Naive thymus-derived CD8-positive, alpha-beta T cell (primary cell): ENCODE measurements at regions of chr6 and their contacts with region 1.

Region 1: GRCh38 chr6:37516076-37516919 is 16.6 kb upstream of the CCDC167 start:
- DNase-seq: peak; percentile 79 to 97 (median 93)
- ATAC-seq: peak; percentile 86 to 89
- H3K4me3 Mint-ChIP-seq: peak overlapping the region; percentile 80 to 97 (median 92)
- H3K27ac Mint-ChIP-seq: peak overlapping the region; percentile 97 to 100 (median 100)
- H3K4me1 Mint-ChIP-seq: peaks cover 53 to 93% (median 87%) of the 10 kb centered on the region in 4 donors
- H3K27me3 Mint-ChIP-seq: no peaks in the 10 kb centered on the region

Region 2: DNA sequence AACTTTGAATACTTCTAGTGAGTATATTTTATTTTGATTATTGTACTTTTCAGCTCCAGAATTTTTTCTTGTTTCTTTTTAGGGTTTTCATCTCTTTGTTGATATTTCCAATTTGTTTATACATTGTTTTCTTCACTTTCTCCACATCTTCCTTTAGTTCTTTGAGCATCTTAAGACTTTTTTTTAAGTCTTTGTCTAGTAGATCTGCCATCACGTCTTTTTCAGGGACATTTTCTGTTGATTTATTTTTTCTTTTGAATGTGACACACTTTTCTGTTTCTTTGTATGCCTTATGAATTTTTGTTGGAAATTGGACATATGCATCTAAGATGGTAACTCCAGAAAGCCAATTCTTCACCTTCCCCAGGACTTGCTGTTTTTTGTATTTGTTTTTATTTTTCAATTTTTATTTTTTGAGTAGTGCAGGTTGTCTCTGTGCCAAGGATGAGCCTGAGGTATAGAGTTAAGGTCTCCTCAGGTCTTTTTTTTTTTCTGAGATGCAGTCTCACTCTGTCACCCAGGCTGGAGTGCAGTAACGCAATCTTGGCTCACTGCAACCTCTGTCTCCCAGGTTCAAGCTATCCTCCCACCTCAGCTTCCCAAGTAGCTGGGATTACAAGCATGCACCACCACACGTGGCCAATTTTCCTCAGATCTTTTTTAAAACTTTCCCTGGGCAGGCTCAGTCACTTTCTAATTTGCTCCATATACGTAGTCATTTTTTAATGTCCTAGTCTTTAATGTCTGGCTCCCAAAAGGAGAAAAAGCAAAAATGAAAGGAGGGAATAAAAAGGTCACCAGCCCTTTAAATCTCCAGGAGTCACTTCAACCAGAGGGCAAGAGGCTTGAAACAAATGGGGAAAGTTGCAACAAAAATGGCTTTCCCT is 90.0 kb before region 1 on chr6:
- POLR2A ChIA-PET with region 1: no interaction called
- DNase-seq: no peak
- ATAC-seq: no peak
- H3K4me3 Mint-ChIP-seq: no peak overlapping the region
- H3K27ac Mint-ChIP-seq: no peak overlapping the region
- H3K4me1 Mint-ChIP-seq: no peaks in the 10 kb centered on the region
- H3K27me3 Mint-ChIP-seq: peaks cover 0 to 32% (median 6%) of the 10 kb centered on the region in 5 donors

Region 3: DNA sequence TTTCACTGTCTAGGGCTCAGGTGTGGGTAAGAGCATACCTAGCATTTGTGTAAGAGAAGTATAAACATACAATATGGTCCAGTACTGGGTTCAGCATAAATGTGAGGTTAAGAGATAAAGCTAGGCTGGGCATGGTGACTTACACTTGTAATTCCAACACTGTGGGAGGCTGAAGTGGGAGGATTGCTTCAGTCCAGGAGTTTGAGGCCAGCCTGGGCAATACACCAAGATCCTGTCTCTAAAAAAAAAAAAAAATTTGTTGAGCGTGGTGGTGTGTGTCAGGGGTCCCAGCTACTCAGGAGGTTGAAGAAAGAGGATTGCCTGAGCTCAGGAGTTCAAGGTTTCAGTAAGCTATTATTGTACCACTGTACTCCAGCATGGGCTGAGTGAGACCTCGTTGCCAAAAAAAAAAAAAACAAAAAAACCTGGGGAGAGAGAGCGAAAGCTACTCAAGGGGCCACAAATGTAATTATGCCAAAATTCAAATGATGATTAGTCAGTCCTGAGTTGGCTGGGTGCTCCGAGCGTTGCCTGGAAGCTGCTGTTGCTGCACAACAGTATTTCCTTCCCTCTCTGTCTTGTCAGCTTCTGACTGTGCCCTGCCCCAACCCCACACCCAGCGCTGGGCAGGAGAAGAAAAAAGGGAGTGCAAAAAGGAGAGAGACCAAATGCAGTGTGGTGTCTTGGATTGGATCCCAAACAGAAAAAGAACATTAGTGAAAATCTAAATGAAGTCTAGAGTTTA is 59.3 kb before region 1 on chr6:
- POLR2A ChIA-PET with region 1: no interaction called
- DNase-seq: no peak
- ATAC-seq: no peak
- H3K4me3 Mint-ChIP-seq: no peak overlapping the region
- H3K27ac Mint-ChIP-seq: peak overlapping the region in 4 of 10 donors; percentile 38 to 82 (median 58)
- H3K4me1 Mint-ChIP-seq: peaks cover 0 to 5% (median 1%) of the 10 kb centered on the region in 4 donors
- H3K27me3 Mint-ChIP-seq: no peaks in the 10 kb centered on the region

Region 4: GRCh38 chr6:37489660-37490361 is 26.5 kb before region 1 on chr6:
- POLR2A ChIA-PET with region 1: interaction called, 29 read pairs
- DNase-seq: peak in 4 of 10 donors; percentile 24 to 39 (median 30)
- ATAC-seq: peak; percentile 85
- H3K4me3 Mint-ChIP-seq: peak overlapping the region in 7 of 10 donors; percentile 11 to 86 (median 32)
- H3K27ac Mint-ChIP-seq: peak overlapping the region; percentile 70 to 100 (median 88)
- H3K4me1 Mint-ChIP-seq: peaks cover 36 to 66% (median 44%) of the 10 kb centered on the region in 4 donors
- H3K27me3 Mint-ChIP-seq: no peaks in the 10 kb centered on the region

Region 5: DNA sequence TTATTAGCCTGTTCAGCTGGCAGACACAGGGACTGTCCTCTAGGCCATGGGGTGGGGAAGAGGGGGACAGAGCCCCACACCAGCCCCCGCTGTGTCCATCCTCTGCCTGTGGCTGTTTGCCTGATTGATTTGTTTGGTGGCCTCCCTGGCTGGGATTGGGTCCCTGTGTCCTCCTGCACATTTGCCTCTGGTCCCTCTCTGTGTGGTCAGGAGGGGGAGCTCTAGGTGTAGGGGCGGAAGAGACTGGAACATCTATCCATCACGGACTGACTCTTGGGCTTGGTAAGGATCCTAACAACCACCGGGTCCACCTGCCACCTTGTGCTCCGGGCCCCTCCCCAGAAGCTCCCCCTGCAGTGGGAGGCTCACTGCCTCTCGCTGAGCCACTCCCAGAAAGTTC is 21.8 kb after region 1 on chr6:
- POLR2A ChIA-PET with region 1: interaction called, 54 read pairs
- DNase-seq: no peak
- ATAC-seq: no peak
- H3K4me3 Mint-ChIP-seq: no peak overlapping the region
- H3K27ac Mint-ChIP-seq: peak overlapping the region in 3 of 10 donors; percentile 54 to 86 (median 67)
- H3K4me1 Mint-ChIP-seq: peaks cover 9 to 42% (median 15%) of the 10 kb centered on the region in 4 donors
- H3K27me3 Mint-ChIP-seq: peaks cover 0 to 2% (median 0%) of the 10 kb centered on the region in 5 donors

Region 6: DNA sequence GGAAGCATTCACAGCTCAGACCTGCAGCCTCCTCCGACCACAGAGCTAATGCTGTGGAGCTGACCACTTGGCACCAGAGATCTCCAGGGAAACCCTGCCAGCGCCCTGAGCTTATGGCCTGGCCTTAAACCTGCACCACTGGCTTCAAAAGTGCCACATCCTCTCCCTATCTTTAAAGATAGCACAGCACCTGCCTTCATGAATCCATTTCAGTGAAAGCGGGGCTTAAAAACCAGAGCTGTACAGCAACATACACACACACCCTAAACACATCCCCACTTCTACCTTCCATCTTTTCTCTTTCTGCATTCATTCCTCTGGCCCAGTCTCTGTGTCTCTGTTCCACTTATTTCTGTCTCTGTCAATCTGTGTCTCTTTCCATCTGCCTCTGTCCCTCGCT is 43.2 kb after region 1 on chr6:
- POLR2A ChIA-PET with region 1: interaction called, 36 read pairs
- DNase-seq: peak in 3 of 10 donors; percentile 21 to 39 (median 31)
- ATAC-seq: peak; percentile 57 to 78
- H3K4me3 Mint-ChIP-seq: peak overlapping the region; percentile 12 to 63 (median 54)
- H3K27ac Mint-ChIP-seq: peak overlapping the region; percentile 11 to 86 (median 72)
- H3K4me1 Mint-ChIP-seq: peaks cover 25 to 76% (median 28%) of the 10 kb centered on the region in 4 donors
- H3K27me3 Mint-ChIP-seq: no peaks in the 10 kb centered on the region

Region 7: GRCh38 chr6:37576336-37576813 is 60.1 kb after region 1 on chr6:
- POLR2A ChIA-PET with region 1: no interaction called
- DNase-seq: no peak
- ATAC-seq: no peak
- H3K4me3 Mint-ChIP-seq: peak overlapping the region in 1 of 10 donors; percentile 29
- H3K27ac Mint-ChIP-seq: no peak overlapping the region
- H3K4me1 Mint-ChIP-seq: peaks cover 0 to 1% (median 0%) of the 10 kb centered on the region in 4 donors
- H3K27me3 Mint-ChIP-seq: peaks cover 0 to 10% (median 4%) of the 10 kb centered on the region in 5 donors

Region 8: GRCh38 chr6:37819177-37819823 is 303.0 kb after region 1 on chr6 and contains the start of gene ZFAND3:
- POLR2A ChIA-PET with region 1: interaction called, 14 read pairs
- DNase-seq: peak; percentile 81 to 98 (median 91)
- ATAC-seq: peak; percentile 81 to 82
- H3K4me3 Mint-ChIP-seq: peak within 1 kb of the TSS; percentile 93 to 99 (median 98)
- H3K27ac Mint-ChIP-seq: peak within 1 kb of the TSS; percentile 95 to 99 (median 98)
- H3K4me1 Mint-ChIP-seq: peaks cover 24 to 62% (median 55%) of the 10 kb centered on the region in 4 donors
- H3K27me3 Mint-ChIP-seq: peaks cover 0 to 1% (median 0%) of the 10 kb centered on the region in 5 donors
- polyA plus RNA-seq, gene ZFAND3: 3.7 to 4.5 (median 3.8) TPM

Region 9: GRCh38 chr6:39387785-39388184 is 1871.5 kb after region 1 on chr6:
- POLR2A ChIA-PET with region 1: no interaction called
- DNase-seq: no peak
- ATAC-seq: no peak
- H3K4me3 Mint-ChIP-seq: no peak overlapping the region
- H3K27ac Mint-ChIP-seq: no peak overlapping the region
- H3K4me1 Mint-ChIP-seq: no peaks in the 10 kb centered on the region
- H3K27me3 Mint-ChIP-seq: peaks cover 4 to 31% (median 13%) of the 10 kb centered on the region in 5 donors